MCF 10A (cell line): ENCODE measurements at regions of chr6 and their contacts with region 1.

Region 1: GRCh38 chr6:111973118-111973761 is 80.7 kb upstream of the CCN6 start:
- DNase-seq: peak; percentile 74
- H3K4me3 Mint-ChIP-seq: peak overlapping the region; percentile 67
- H3K27ac Mint-ChIP-seq: peak overlapping the region; percentile 100
- H3K4me1 Mint-ChIP-seq: peaks cover 25% of the 10 kb centered on the region
- H3K27me3 Mint-ChIP-seq: no peaks in the 10 kb centered on the region
- CTCF ChIP-seq: no peak

Region 2: GRCh38 chr6:111388681-111389080 is 584.6 kb before region 1 on chr6:
- CTCF ChIA-PET with region 1: no interaction called
- POLR2A ChIA-PET with region 1: no interaction called
- intact Hi-C with region 1: no loop called
- DNase-seq: no peak
- H3K4me3 Mint-ChIP-seq: no peak overlapping the region
- H3K27ac Mint-ChIP-seq: no peak overlapping the region
- H3K4me1 Mint-ChIP-seq: no peaks in the 10 kb centered on the region
- H3K27me3 Mint-ChIP-seq: no peaks in the 10 kb centered on the region
- CTCF ChIP-seq: no peak

Region 3: DNA sequence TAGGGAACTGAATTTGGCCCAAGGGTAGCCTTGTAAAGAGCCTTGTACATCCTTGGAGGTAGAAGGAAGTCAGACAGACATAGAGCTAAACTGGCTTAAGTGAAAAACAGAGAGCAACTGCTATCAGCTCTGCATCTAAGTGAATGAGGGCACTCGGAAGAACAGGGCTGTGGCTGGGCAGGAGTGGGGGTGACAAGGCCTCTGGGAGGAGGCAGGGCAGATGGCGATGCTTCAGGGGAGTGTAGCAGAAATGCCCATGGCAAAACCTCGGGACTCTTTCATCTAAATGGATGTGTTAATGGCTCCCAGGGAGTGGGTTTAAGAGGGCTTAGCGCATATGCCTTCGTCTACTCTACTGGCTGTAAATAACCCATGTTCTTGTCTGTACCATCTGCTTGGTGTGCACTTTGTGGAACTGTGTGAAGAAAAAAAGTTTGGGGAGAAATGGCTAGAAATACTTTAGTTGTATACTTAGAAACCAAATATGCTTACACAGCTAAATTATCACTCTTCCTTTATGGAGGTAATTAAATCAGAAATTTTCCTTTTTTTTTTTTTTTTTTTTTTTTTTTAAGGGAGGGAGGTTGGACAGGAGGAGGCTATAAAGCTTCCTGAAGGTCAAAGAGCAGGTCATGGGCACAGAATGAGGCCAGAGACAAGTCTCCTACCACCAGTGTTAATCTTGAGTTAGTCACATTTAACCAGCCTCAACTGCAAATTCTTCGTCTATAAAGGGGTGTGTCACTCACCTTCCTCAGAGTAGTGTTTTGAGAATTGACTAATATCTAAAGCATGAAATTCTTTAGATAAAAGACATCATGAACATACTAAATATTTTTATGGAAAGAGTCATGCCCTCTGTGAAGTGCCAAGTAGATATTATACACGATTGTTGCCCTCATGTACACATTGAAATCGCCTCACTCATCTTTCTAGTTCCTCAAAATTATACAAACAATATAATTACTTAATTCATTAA is 160.9 kb before region 1 on chr6:
- CTCF ChIA-PET with region 1: no interaction called
- POLR2A ChIA-PET with region 1: no interaction called
- intact Hi-C with region 1: no loop called
- DNase-seq: no peak
- H3K4me3 Mint-ChIP-seq: no peak overlapping the region
- H3K27ac Mint-ChIP-seq: peak overlapping the region; percentile 61
- H3K4me1 Mint-ChIP-seq: peaks cover 20% of the 10 kb centered on the region
- H3K27me3 Mint-ChIP-seq: no peaks in the 10 kb centered on the region
- CTCF ChIP-seq: no peak

Region 4: GRCh38 chr6:111873178-111874024 is 99.8 kb before region 1 on chr6 and contains the start of gene FYN:
- CTCF ChIA-PET with region 1: interaction called, 3 read pairs
- POLR2A ChIA-PET with region 1: interaction called, 7 read pairs
- intact Hi-C with region 1: loop called (anchors 2 kb)
- DNase-seq: peak; percentile 96
- H3K4me3 Mint-ChIP-seq: peak within 1 kb of the TSS; percentile 82
- H3K27ac Mint-ChIP-seq: peak within 1 kb of the TSS; percentile 28
- H3K4me1 Mint-ChIP-seq: peaks cover 13% of the 10 kb centered on the region
- H3K27me3 Mint-ChIP-seq: peaks cover 11% of the 10 kb centered on the region
- CTCF ChIP-seq: peak; percentile 13
- total RNA-seq, gene FYN: 37.8 and 53.7 TPM in 2 replicates

Region 5: DNA sequence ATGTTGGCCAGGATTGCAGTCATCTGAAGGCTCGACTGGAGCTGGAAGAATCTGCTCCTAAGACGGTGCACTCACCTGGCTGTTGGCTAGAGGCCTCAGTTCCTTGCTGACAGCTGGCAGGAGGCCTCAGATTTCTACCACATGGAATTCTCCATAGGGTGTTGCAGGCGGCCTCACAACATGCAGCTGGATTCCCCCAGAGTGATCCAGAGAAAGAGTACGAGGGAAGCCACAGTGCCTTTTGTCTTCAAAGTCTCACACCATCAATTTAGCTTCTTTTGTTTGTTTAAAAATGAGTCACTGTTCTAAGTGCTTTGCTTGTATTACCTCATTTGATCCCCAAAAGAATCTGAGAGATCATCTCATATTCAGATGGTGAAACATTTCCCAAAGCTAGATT is 34.5 kb before region 1 on chr6:
- CTCF ChIA-PET with region 1: no interaction called
- POLR2A ChIA-PET with region 1: no interaction called
- intact Hi-C with region 1: no loop called
- DNase-seq: peak; percentile 52
- H3K4me3 Mint-ChIP-seq: no peak overlapping the region
- H3K27ac Mint-ChIP-seq: no peak overlapping the region
- H3K4me1 Mint-ChIP-seq: peaks cover 6% of the 10 kb centered on the region
- H3K27me3 Mint-ChIP-seq: no peaks in the 10 kb centered on the region
- CTCF ChIP-seq: no peak

Region 6: DNA sequence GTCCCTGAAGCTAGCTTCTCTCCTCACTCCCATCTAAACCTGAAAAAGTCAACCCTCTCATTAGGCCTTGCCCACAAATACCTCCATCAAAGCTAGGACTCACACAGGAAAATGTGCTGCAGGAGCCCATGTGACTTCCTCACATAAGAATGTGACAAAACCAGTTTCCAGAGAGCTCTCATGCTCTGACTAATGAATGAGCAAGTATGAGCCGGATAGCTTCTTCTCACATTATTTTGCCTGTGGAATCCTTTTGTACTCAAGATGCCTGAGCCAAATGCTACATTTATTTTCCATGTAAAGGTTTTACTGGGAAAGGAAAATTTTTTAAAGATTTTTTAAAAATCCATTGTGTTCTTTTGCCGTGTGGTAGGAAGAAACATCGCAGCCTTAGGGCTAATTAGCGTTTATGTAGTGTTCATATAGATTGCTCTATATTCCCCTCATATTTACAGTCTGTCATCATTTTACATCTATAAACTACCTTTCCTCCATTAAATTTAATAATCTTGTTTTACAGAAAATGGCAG is 12.0 kb after region 1 on chr6:
- CTCF ChIA-PET with region 1: interaction called, 16 read pairs
- POLR2A ChIA-PET with region 1: interaction called, 30 read pairs
- intact Hi-C with region 1: no loop called
- DNase-seq: peak; percentile 66
- H3K4me3 Mint-ChIP-seq: no peak overlapping the region
- H3K27ac Mint-ChIP-seq: peak overlapping the region; percentile 40
- H3K4me1 Mint-ChIP-seq: peaks cover 12% of the 10 kb centered on the region
- H3K27me3 Mint-ChIP-seq: no peaks in the 10 kb centered on the region
- CTCF ChIP-seq: no peak

Region 7: GRCh38 chr6:112163295-112164257 is 190.3 kb after region 1 on chr6:
- CTCF ChIA-PET with region 1: no interaction called
- POLR2A ChIA-PET with region 1: no interaction called
- intact Hi-C with region 1: no loop called
- DNase-seq: peak; percentile 71
- H3K4me3 Mint-ChIP-seq: no peak overlapping the region
- H3K27ac Mint-ChIP-seq: no peak overlapping the region
- H3K4me1 Mint-ChIP-seq: peaks cover 6% of the 10 kb centered on the region
- H3K27me3 Mint-ChIP-seq: peaks cover 51% of the 10 kb centered on the region
- CTCF ChIP-seq: peak; percentile 85